ENCODE measurements at regions of chr1 and their contacts with region 1.

Region 1: DNA sequence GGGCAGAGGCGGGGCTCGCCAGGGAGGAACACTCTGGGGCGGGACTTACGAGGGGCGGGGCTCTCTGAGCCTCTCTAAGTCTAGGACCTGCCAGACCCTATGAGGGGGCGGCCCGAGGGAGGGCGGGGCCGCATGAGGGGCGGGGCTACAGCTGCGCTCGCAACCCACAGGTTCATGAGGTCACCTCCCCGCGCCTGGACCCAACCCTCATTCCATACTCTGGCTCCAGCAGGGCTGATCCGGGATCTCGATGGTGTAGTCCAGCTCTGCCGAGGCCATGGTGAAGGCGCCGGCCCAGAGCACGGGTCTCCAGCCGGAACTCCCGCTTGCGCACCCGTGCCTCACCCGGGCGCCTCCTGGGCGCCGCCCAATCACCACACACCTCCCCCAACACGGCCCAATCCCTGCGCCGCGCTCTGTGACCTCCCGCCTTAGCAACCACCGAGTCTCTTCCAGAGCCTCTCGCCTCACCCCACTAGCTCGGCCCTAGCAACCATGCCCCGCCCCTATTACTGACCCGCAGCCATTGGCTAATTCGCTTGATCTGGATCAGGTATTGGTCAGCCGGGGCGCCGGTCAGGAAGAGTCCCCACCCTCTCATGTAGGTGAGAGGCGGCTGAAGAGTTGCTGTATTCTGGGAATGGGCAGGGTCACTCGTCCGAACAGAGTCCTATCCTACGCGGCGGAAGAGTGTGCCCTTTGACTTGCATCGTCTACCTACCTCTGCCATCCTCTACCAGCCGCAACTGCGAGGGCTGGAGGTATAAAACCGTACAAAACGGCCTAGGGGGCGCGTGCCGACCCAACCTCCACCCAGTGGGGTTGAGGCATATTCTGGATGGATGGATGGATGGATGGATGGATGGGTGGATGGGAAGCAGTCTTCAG is at the starts of genes ARMH1 and TMEM53:
- DNase-seq: peak; percentile 98
- H3K4me3 Mint-ChIP-seq: peak within 1 kb of the TSS; percentile 80
- H3K27ac Mint-ChIP-seq: peak within 1 kb of the TSS; percentile 79
- H3K4me1 Mint-ChIP-seq: peaks cover 30% of the 10 kb centered on the region
- H3K27me3 Mint-ChIP-seq: no peaks in the 10 kb centered on the region
- total RNA-seq, gene ARMH1: 95.3 and 99.8 TPM in 2 replicates
- total RNA-seq, gene TMEM53: 4.3 and 6.6 TPM in 2 replicates

Region 2: GRCh38 chr1:44354840-44355581 is 319.3 kb before region 1 on chr1 and contains the start of gene ERI3:
- intact Hi-C with region 1: loop called (anchors 1 kb)
- DNase-seq: peak; percentile 95
- H3K4me3 Mint-ChIP-seq: peak within 1 kb of the TSS; percentile 93
- H3K27ac Mint-ChIP-seq: peak within 1 kb of the TSS; percentile 88
- H3K4me1 Mint-ChIP-seq: peaks cover 34% of the 10 kb centered on the region
- H3K27me3 Mint-ChIP-seq: no peaks in the 10 kb centered on the region
- total RNA-seq, gene ERI3: 51.4 and 55.4 TPM in 2 replicates

Region 3: GRCh38 chr1:44652445-44653106 is 21.8 kb before region 1 on chr1:
- intact Hi-C with region 1: loop called (anchors 2 kb)
- DNase-seq: peak; percentile 59
- H3K4me3 Mint-ChIP-seq: no peak overlapping the region
- H3K27ac Mint-ChIP-seq: no peak overlapping the region
- H3K4me1 Mint-ChIP-seq: no peaks in the 10 kb centered on the region
- H3K27me3 Mint-ChIP-seq: no peaks in the 10 kb centered on the region

Region 4: GRCh38 chr1:44739361-44740178 is 65.2 kb after region 1 on chr1 and contains the start of gene KIF2C:
- intact Hi-C with region 1: no loop called
- DNase-seq: peak; percentile 95
- H3K4me3 Mint-ChIP-seq: peak within 1 kb of the TSS; percentile 92
- H3K27ac Mint-ChIP-seq: peak within 1 kb of the TSS; percentile 90
- H3K4me1 Mint-ChIP-seq: peaks cover 37% of the 10 kb centered on the region
- H3K27me3 Mint-ChIP-seq: no peaks in the 10 kb centered on the region
- total RNA-seq, gene KIF2C: 68.7 and 72.9 TPM in 2 replicates

Region 5: DNA sequence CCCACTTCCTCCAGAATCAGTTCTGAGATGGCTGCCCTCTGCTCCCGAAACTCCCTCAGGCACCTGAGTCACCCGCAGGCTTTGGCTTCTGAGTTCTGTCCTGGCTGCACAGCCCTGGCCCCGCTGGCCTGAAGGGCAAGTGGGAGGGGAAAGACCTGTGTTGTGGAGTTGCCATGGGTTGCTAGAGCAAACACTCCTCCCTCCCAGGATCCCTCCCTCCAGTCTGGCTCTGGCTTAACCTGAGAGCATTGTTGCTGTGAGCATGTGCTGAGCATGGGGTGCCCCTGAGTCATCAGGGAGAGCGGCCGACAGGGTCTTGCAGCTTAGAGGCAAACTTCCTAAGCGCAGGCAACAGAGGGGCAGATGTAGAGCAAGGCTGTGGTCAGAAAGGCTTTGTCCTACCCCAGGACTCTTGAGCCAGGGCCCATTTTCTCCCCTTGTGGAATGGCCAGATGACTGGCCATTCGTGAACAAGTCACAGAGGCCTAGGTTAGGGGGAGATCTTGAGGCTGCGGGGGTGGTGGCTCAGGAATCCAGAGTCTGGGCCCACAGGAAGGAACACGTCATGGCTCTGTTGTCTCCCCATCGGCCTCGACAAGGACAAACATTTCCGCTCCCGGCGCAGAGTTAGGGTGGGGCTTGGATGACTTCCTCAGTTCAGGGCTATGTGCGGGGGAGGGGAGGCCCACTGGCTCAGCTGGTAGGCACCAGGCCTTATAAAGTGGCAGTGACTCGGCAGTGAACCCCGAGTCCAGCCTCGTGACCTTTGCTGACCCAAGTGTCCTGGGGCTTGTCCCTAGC is 133.1 kb after region 1 on chr1 and contains the start of gene DYNLT4:
- intact Hi-C with region 1: loop called (anchors 2 kb)
- DNase-seq: peak; percentile 84
- H3K4me3 Mint-ChIP-seq: peak within 1 kb of the TSS; percentile 68
- H3K27ac Mint-ChIP-seq: peak within 1 kb of the TSS; percentile 99
- H3K4me1 Mint-ChIP-seq: peaks cover 88% of the 10 kb centered on the region
- H3K27me3 Mint-ChIP-seq: no peaks in the 10 kb centered on the region
- total RNA-seq, gene DYNLT4: 0.44 TPM in 1 of 2 replicates, not detected in the other

Region 6: GRCh38 chr1:45339789-45340570 is 665.6 kb after region 1 on chr1 and contains the starts of genes MUTYH and TOE1:
- intact Hi-C with region 1: loop called (anchors 1 kb)
- DNase-seq: peak; percentile 94
- H3K4me3 Mint-ChIP-seq: peak within 1 kb of the TSS; percentile 99
- H3K27ac Mint-ChIP-seq: peak within 1 kb of the TSS; percentile 100
- H3K4me1 Mint-ChIP-seq: peaks cover 39% of the 10 kb centered on the region
- H3K27me3 Mint-ChIP-seq: no peaks in the 10 kb centered on the region
- total RNA-seq, gene MUTYH: 53.4 and 55.9 TPM in 2 replicates
- total RNA-seq, gene TOE1: 39.1 and 41.4 TPM in 2 replicates

Measured in activated T-helper 1 cell treated with anti-CD3 and anti-CD28 coated beads, Interleukin-12 subunit alpha, Interleukin-12 subunit beta, Interleukin-2, Interleukin-4 antibody, amounts not matched to agents 30 ng/mL and 10 ng/mL and 1 ng/mL, durations not matched to agents 14 hours and 24 hours and 36 hours (primary cell).